Activated T-helper 1 cell treated with anti-CD3 and anti-CD28 coated beads, Interleukin-12 subunit alpha, Interleukin-12 subunit beta, Interleukin-2, Interleukin-4 antibody, amounts not matched to agents 30 ng/mL and 10 ng/mL and 1 ng/mL, durations not matched to agents 14 hours and 24 hours and 36 hours (primary cell): ENCODE measurements at regions of chr10 and their contacts with region 1.

Region 1: GRCh38 chr10:62816331-62817120 is at the start of gene EGR2:
- DNase-seq: peak; percentile 94
- H3K4me3 Mint-ChIP-seq: peak within 1 kb of the TSS; percentile 98
- H3K27ac Mint-ChIP-seq: peak within 1 kb of the TSS; percentile 98
- H3K4me1 Mint-ChIP-seq: peaks cover 58% of the 10 kb centered on the region
- H3K27me3 Mint-ChIP-seq: peaks cover 38% of the 10 kb centered on the region
- total RNA-seq, gene EGR2: 268 and 282 TPM in 2 replicates

Region 2: DNA sequence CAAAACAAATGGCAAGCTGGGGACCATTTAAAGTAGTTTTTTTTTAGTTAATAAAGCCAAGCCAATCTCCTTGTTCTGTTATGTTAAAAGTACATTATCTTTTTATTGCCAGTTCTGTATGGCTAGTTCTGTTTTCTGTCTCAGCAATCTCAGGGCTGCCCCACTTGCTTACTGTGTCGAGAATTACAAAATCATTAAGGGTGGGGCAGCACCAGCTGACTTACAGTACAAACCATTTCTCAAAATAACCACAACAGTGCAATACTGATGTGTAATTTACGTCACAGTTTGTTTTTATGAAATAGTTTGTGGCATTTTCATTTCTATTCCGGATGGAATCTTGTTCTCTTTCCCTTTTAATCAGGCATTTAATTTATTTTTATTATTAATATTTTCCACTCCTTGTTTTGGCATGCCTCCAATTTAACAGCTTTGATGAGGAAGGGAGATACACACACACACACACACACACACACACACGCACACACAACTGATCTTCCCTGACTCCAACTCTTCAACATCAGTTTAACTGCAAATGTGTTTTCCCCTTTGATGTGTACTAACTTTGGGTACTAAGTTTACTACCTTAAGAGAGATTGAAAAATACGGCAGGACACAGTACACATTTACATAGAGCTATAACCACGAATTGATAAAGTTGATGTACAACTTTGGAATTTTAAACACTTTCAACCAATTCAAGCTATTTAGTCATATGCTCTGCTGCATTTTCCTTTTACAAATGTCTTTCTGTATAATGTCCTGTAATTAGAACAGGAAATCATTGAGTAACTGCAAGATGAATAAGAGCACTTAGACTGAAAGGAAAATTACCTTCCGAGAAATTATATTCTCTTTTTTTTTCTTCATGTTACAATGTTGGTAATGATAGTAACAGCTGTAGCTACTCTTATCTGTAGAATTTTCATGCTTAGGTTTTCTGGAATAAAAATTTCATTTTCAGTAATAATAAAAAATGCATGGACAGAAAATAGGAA is 823.6 kb before region 1 on chr10:
- intact Hi-C with region 1: loop called (anchors 2 kb)
- DNase-seq: peak; percentile 69
- H3K4me3 Mint-ChIP-seq: peak overlapping the region; percentile 76
- H3K27ac Mint-ChIP-seq: peak overlapping the region; percentile 90
- H3K4me1 Mint-ChIP-seq: peaks cover 86% of the 10 kb centered on the region
- H3K27me3 Mint-ChIP-seq: no peaks in the 10 kb centered on the region

Region 3: GRCh38 chr10:62528441-62528840 is 288.1 kb before region 1 on chr10:
- intact Hi-C with region 1: loop called (anchors 1 kb)
- DNase-seq: no peak
- H3K4me3 Mint-ChIP-seq: no peak overlapping the region
- H3K27ac Mint-ChIP-seq: peak overlapping the region; percentile 1
- H3K4me1 Mint-ChIP-seq: peaks cover 33% of the 10 kb centered on the region
- H3K27me3 Mint-ChIP-seq: peaks cover 9% of the 10 kb centered on the region

Region 4: DNA sequence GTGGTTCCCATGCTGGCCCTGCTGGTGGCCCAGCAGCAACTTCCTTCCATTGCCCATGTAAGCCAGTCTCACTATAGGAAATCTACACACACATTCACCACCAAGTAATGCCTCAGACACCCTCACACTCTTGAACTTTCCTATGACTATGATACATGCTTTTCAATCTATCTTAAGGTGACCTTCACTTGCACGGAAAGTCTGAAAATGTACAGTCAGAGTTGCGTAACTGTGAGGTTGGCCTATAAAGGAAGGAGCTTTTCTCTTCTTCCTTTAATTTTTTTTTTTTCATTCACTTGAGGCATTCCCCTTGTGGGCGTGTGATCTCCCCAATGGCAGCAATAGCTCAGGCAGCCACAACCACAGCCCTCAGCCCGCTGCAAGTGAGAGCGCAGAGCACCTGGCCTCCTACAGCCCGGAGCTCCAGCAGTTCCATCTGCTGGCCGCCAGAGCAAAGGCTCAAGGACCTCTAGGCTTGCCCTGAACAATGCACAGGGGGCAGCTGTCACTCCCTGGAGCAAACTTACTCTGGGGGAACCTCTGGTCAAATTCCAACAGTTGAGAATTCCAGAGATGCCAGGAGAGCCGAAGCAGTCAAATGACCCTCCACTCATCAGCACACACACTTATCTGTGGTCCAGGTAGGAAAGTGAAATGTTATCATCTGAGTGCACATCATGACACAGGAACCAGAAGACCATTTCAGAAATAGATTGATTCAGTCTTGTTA is 135.2 kb before region 1 on chr10:
- intact Hi-C with region 1: loop called (anchors 1 kb)
- DNase-seq: peak; percentile 80
- H3K4me3 Mint-ChIP-seq: peak overlapping the region; percentile 69
- H3K27ac Mint-ChIP-seq: peak overlapping the region; percentile 95
- H3K4me1 Mint-ChIP-seq: peaks cover 77% of the 10 kb centered on the region
- H3K27me3 Mint-ChIP-seq: no peaks in the 10 kb centered on the region

Region 5: GRCh38 chr10:62804356-62805230 is 11.9 kb before region 1 on chr10 and contains the start of gene ADO:
- intact Hi-C with region 1: loop called (anchors 1 kb)
- DNase-seq: peak; percentile 68
- H3K4me3 Mint-ChIP-seq: peak within 1 kb of the TSS; percentile 90
- H3K27ac Mint-ChIP-seq: peak within 1 kb of the TSS; percentile 95
- H3K4me1 Mint-ChIP-seq: peaks cover 41% of the 10 kb centered on the region
- H3K27me3 Mint-ChIP-seq: peaks cover 11% of the 10 kb centered on the region
- total RNA-seq, gene ADO: 52.3 and 55.8 TPM in 2 replicates

Region 6: GRCh38 chr10:63083904-63084689 is 267.6 kb after region 1 on chr10:
- intact Hi-C with region 1: loop called (anchors 1 kb)
- DNase-seq: peak; percentile 14
- H3K4me3 Mint-ChIP-seq: no peak overlapping the region
- H3K27ac Mint-ChIP-seq: no peak overlapping the region
- H3K4me1 Mint-ChIP-seq: peaks cover 12% of the 10 kb centered on the region
- H3K27me3 Mint-ChIP-seq: peaks cover 28% of the 10 kb centered on the region

Region 7: GRCh38 chr10:63521416-63522276 is 705.1 kb after region 1 on chr10:
- intact Hi-C with region 1: loop called (anchors 5 kb)
- DNase-seq: peak; percentile 49
- H3K4me3 Mint-ChIP-seq: peak overlapping the region; percentile 83
- H3K27ac Mint-ChIP-seq: peak overlapping the region; percentile 88
- H3K4me1 Mint-ChIP-seq: peaks cover 63% of the 10 kb centered on the region
- H3K27me3 Mint-ChIP-seq: no peaks in the 10 kb centered on the region